K562 (cell line): ENCODE measurements at regions of chr11 and their contacts with region 1.

Region 1: DNA sequence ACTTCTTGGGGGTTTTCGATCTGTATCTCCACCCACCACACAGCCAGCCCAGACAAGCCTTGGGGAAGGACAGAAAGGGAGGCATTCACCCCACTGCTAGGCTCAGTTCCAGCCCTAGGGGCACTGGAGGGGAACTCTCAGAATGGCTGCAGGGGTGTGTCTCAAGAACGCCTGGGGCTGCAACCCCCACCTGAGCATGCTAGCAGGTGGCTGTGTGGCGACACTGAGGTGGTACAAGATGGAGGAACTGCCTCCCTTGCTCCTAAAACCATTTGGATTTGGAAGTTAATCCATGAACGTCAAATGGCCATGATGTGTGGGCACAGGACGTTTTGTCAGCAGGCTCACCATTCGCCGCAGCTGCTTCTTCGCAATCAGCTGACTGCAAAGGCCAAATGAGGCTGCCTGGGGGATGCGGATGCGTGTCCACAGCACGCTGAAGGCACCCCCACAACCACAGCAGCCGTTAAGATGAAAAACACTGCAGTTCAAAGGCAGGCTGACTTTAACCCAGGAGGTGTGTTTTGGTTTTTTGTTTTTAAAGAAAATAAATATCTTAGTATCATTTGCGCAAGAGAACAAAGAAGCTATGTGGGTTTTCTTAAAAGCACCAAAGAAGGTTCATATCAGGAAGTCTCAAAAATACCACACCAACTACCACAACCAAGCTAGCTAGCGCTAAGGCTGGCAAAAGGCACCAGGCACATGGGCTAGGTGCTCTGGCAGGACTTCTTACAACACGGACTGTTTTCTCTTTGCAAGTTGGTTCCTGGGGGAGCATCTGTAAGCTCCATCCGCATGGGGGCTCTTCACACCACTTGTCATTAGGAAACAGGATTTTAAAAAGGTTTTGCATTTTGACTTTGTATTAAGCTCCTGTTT is 22.2 kb upstream of the NAP1L4 start:
- DNase-seq: no peak
- ATAC-seq: no peak
- H3K4me3 ChIP-seq: no peak overlapping the region
- H3K27ac ChIP-seq: no peak overlapping the region
- H3K4me1 ChIP-seq: peaks cover 0 to 7% of the 10 kb centered on the region in 2 experiments; a peak in 1 of 5 replicates
- H3K27me3 ChIP-seq: no peaks in the 10 kb centered on the region
- CTCF ChIP-seq: no peak
- EP300 ChIP-seq: no peak
- POLR2A ChIP-seq: no peak
- RAD21 ChIP-seq: no peak

Region 2: GRCh38 chr11:3000082-3000961 is 14.0 kb before region 1 on chr11:
- CTCF ChIA-PET with region 1: no interaction called
- POLR2A ChIA-PET with region 1: interaction called, 13 read pairs
- in situ Hi-C with region 1: no loop called
- intact Hi-C with region 1: no loop called
- DNase-seq: no peak
- ATAC-seq: no peak
- H3K4me3 ChIP-seq: no peak overlapping the region
- H3K27ac ChIP-seq: no peak overlapping the region
- H3K4me1 ChIP-seq: peaks cover 0 to 6% of the 10 kb centered on the region in 2 experiments; a peak in 2 of 5 replicates
- H3K27me3 ChIP-seq: no peaks in the 10 kb centered on the region
- CTCF ChIP-seq: no peak
- EP300 ChIP-seq: no peak
- POLR2A ChIP-seq: 0 out of 2 replicates have a peak, but pooled peaks have one; percentile 24
- RAD21 ChIP-seq: no peak